Thyroid gland (tissue), 4 donors: ENCODE measurements at regions of chrX and their contacts with region 1.

Region 1: GRCh38 chrX:130916636-130917422 is 13.8 kb upstream of the ENOX2 start:
- DNase-seq: peak; percentile 29
- H3K4me3 ChIP-seq: no peak overlapping the region
- H3K27ac ChIP-seq: no peak overlapping the region
- H3K4me1 ChIP-seq: no peaks in the 10 kb centered on the region
- H3K27me3 ChIP-seq: no peaks in the 10 kb centered on the region
- CTCF ChIP-seq: peak in 5 of 6 experiments; percentile 44 to 73 (median 58)
- POLR2A ChIP-seq: no peak

Region 2: DNA sequence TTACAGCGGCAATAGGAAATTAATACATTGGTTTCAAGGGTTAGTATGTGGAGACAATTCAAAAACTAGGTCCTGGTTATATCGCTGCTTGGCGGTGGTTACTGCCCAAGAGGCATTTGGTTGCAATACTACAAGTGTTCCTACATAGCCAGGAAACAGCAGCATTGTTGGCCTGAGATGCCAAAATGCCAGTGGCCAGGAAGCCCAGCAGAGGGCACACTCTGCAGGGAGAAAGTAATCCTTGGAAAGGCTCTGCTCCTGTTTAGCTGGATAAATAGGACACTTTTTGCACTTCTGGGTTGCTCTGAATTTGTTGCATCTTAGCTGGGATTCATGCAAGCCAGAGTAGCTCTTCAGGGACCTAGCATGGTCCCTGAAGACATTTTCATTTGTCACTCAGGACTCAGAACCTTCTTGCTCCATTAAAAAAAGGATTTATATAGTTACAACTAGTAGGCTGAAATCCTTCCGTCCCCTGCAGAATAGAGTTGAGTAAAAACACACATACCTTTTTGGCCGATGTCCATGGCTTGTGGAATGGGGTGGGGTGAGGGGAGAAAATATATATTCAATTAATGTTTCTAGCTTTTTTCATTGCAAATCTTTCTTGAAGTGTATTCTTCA is 523.3 kb before region 1 on chrX:
- intact Hi-C with region 1: loop called (anchors 10 kb)
- DNase-seq: peak; percentile 37 to 43
- H3K4me3 ChIP-seq: no peak overlapping the region
- H3K27ac ChIP-seq: no peak overlapping the region
- H3K4me1 ChIP-seq: no peaks in the 10 kb centered on the region
- H3K27me3 ChIP-seq: no peaks in the 10 kb centered on the region
- CTCF ChIP-seq: peak in 4 of 6 experiments; percentile 12 to 58 (median 47)
- POLR2A ChIP-seq: no peak

Region 3: DNA sequence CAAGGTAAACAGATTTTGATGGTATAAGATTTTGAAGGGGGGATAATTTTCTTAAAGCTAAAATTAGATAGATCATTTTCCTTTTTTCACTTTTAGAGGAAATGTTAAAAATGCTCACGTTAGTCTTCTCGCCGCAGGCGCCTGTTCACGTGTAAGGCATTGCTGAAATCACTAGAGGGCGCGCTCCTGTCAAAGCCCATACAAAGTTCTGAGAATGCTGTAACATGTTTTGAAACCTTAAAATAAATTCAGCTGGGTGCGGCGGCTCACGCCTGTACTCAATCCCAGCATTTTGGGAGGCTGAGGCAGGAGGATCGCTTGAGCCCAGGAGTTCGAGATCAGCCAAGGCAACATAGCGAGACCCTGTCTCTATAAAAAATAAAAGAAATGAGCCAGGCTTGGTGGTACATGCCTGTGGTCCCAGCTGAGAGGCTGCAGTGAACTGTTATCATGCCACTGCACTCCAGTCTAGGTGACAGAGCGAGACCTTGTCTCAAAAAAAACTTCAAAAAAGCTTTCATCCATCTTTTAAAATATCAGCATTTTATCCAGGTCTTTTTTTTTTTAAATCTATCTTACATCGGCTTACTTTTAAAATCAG is 377.0 kb before region 1 on chrX:
- intact Hi-C with region 1: loop called (anchors 5 kb)
- DNase-seq: peak; percentile 39 to 59
- H3K4me3 ChIP-seq: no peak overlapping the region
- H3K27ac ChIP-seq: no peak overlapping the region
- H3K4me1 ChIP-seq: no peaks in the 10 kb centered on the region
- H3K27me3 ChIP-seq: peaks cover 2% of the 10 kb centered on the region
- CTCF ChIP-seq: peak; percentile 13 to 55 (median 33)
- POLR2A ChIP-seq: no peak

Region 4: DNA sequence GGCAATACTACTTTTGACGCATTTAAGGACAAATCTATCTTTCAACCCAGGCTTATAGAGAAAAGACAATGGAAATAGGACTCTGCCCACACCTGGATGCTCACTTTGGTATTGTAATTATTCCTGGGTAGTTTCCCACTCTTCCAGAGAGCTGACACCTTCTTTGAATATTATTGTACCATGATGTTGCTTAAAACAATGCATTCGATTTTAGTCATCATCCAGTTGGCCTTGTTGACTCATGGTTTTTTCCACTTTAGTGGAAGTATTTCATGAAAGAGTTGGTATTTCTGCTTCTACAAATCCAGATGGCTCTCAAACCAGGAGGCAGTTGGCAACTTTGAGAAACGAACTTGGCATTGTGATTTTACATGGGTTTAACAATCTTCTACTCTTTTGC is 138.1 kb before region 1 on chrX:
- intact Hi-C with region 1: no loop called
- DNase-seq: no peak
- H3K4me3 ChIP-seq: no peak overlapping the region
- H3K27ac ChIP-seq: no peak overlapping the region
- H3K4me1 ChIP-seq: no peaks in the 10 kb centered on the region
- H3K27me3 ChIP-seq: no peaks in the 10 kb centered on the region
- CTCF ChIP-seq: no peak
- POLR2A ChIP-seq: no peak